Activated B cell treated with CpG ODN at 0.5 μM for 24 hours (primary cell): ENCODE measurements at regions of chr19 and their contacts with region 1.

Region 1: DNA sequence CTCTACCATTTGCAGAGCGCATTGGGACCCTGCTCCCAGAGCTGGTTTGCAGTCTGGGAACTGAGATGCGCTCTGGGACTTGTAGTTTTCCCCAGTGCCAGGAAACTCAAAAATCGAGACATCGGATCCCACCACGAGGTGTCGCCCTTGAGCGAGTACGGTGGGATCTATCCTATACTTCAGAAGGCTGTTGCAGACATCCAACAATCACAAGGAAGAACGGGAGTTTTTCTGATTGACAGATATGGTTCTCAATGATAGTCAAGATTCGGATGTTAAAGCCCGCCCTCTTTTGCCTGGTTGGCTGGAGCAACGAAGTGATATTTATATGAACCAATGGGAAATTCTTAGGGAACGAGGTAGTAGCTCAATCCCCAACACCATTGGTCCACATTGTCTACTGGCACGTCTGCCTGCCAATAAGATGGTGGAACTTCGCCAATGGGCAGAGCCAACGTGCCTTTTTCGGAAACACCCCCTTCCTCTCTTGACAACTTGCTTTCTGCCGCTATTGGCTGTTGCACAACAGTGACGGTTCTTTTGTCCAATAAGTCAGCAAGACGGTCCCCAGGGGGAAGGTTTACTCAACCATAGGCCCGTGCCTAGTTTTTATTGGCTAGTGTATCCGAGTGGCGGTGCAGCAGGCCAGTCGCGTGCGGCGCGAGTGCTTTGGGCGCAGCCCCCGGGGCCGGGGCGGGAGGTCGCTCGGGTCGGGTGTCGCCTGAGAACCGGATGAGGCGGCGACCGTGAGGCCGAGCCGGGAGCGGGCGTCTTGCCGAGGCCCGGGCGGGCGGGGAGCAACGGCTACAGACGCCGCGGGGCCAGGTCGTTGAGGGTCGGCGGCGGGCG is at the start of gene DNM2:
- DNase-seq: peak; percentile 92
- ATAC-seq: peak; percentile 86
- H3K4me3 Mint-ChIP-seq: peak within 1 kb of the TSS; percentile 91
- H3K27ac Mint-ChIP-seq: peak within 1 kb of the TSS; percentile 80
- H3K4me1 Mint-ChIP-seq: peaks cover 51% of the 10 kb centered on the region
- H3K27me3 Mint-ChIP-seq: no peaks in the 10 kb centered on the region
- CTCF ChIP-seq: no peak
- total RNA-seq, gene DNM2: 220 and 257 TPM in 2 replicates

Region 2: DNA sequence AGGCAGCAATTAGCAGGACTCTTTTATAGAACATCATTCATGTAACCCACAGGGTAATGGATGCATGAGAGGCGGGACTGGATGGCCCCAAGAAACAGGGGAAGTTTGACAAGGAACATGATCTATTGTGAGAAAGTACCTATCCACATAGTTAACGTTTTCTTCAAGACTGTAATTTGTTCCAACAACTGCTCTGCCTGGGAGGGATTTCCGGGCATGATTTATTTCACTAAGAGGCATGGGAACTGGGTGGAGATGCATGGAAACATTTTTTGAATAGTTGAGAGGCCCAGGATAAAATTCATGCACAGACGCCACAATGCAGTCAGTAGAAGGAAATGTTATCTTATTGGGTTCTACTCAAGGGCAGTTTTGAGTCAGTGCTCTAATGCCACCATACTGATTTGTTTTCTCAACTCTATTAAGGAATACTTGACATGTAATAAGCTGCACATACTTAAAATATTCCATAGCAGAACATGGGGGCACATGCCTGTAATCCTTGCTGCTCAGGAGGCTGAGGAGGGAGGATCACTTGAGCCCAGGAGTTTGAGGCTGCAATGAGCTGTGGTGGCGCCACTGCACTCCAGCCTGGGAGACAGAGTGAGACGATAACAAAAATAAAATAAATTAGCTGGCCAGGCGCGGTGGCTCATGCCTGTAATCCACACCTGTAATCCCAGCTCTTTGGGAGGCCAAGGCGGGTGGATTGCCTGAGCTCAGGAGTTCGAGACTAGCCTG is 183.8 kb before region 1 on chr19:
- CTCF ChIA-PET with region 1: no interaction called
- POLR2A ChIA-PET with region 1: no interaction called
- intact Hi-C with region 1: no loop called
- DNase-seq: no peak
- ATAC-seq: no peak
- H3K4me3 Mint-ChIP-seq: no peak overlapping the region
- H3K27ac Mint-ChIP-seq: no peak overlapping the region
- H3K4me1 Mint-ChIP-seq: peaks cover 2% of the 10 kb centered on the region
- H3K27me3 Mint-ChIP-seq: peaks cover 12% of the 10 kb centered on the region
- CTCF ChIP-seq: no peak

Region 3: GRCh38 chr19:10685210-10685609 is 32.4 kb before region 1 on chr19:
- CTCF ChIA-PET with region 1: no interaction called
- POLR2A ChIA-PET with region 1: no interaction called
- intact Hi-C with region 1: no loop called
- DNase-seq: no peak
- ATAC-seq: no peak
- H3K4me3 Mint-ChIP-seq: no peak overlapping the region
- H3K27ac Mint-ChIP-seq: no peak overlapping the region
- H3K4me1 Mint-ChIP-seq: no peaks in the 10 kb centered on the region
- H3K27me3 Mint-ChIP-seq: no peaks in the 10 kb centered on the region
- CTCF ChIP-seq: no peak

Region 4: DNA sequence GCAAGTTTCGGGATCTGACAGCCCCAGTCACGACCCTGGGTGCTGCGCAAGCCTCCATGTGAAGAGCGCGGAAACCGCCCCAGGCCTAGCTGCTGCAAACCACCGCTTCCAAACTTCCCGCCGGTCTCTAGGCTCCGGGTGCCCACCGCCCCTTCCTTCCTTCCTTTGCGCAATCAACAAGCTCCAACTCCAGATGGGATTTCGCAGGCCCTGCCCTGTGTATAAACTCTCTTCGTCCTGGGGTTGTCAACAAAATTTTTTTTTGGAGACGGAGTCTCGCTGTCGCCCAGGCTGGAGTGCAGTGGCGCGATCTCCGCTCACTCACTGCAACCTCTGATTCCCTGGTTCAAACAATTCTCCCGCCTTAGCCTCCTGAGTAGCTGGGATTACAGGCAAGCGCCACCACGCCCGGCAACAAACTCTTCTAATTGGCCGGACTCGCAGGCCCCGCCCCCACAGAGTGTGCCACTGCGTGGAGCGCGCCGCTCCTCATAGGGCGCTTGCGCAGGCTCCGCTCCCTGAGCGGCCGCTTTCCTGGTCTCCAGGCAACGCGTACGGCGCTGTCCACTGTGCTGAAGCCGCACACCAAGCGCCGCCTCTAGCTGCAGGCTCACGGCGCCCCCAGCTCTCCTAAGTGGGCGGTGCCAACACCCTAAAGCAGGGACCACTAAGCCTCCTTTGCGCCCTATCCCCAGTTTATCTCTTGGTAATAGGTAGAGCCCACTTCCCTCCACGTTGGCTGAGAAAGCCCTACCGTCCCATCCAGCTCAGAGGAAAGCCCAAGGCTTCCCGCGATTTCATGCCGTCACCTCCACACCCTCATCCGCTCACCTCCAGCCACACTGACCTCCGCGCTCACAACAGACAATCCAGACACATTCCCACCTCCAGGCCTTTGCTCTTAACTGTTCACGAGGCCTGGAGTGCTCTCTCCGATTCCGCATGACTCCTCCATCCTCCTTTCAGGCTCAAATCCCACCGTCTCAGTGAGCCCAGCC is 21.9 kb before region 1 on chr19:
- CTCF ChIA-PET with region 1: interaction called, 5 read pairs
- POLR2A ChIA-PET with region 1: interaction called, 22 read pairs
- intact Hi-C with region 1: no loop called
- DNase-seq: peak; percentile 79
- ATAC-seq: peak; percentile 98
- H3K4me3 Mint-ChIP-seq: peak overlapping the region; percentile 76
- H3K27ac Mint-ChIP-seq: peak overlapping the region; percentile 26
- H3K4me1 Mint-ChIP-seq: peaks cover 17% of the 10 kb centered on the region
- H3K27me3 Mint-ChIP-seq: peaks cover 5% of the 10 kb centered on the region
- CTCF ChIP-seq: no peak

Region 5: DNA sequence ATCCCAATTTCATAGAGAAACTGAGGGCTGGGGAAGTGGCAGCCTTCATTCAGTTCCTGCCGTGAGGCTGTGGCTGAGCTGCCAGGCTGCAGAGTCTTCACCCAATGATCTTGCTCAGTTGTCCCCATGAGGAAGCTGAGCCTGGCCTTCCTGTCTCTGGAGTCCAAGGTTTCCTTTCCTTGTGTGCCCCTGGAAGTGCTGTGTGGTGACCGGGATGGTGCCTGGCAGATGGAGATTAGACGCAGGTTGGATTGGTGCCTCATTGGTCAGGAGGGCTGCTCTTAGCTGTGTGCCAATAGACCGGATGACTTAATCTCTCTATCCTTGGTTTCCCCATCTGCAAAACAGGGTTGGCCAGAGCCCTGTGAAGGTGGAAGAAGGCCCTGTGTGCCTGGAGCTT is 24.9 kb after region 1 on chr19:
- CTCF ChIA-PET with region 1: no interaction called
- POLR2A ChIA-PET with region 1: interaction called, 4 read pairs
- intact Hi-C with region 1: loop called (anchors 2 kb)
- DNase-seq: no peak
- ATAC-seq: no peak
- H3K4me3 Mint-ChIP-seq: no peak overlapping the region
- H3K27ac Mint-ChIP-seq: no peak overlapping the region
- H3K4me1 Mint-ChIP-seq: peaks cover 76% of the 10 kb centered on the region
- H3K27me3 Mint-ChIP-seq: no peaks in the 10 kb centered on the region
- CTCF ChIP-seq: no peak

Region 6: GRCh38 chr19:10769533-10770491 is 52.2 kb after region 1 on chr19:
- CTCF ChIA-PET with region 1: interaction called, 18 read pairs
- POLR2A ChIA-PET with region 1: interaction called, 6 read pairs
- intact Hi-C with region 1: loop called (anchors 1 kb)
- DNase-seq: no peak
- ATAC-seq: no peak
- H3K4me3 Mint-ChIP-seq: no peak overlapping the region
- H3K27ac Mint-ChIP-seq: peak overlapping the region; percentile 78
- H3K4me1 Mint-ChIP-seq: peaks cover 46% of the 10 kb centered on the region
- H3K27me3 Mint-ChIP-seq: no peaks in the 10 kb centered on the region
- CTCF ChIP-seq: no peak

Region 7: GRCh38 chr19:10820173-10820572 is 102.6 kb after region 1 on chr19:
- CTCF ChIA-PET with region 1: interaction called, 18 read pairs
- POLR2A ChIA-PET with region 1: interaction called, 3 read pairs
- intact Hi-C with region 1: loop called (anchors 1 kb)
- DNase-seq: no peak
- ATAC-seq: peak; percentile 47
- H3K4me3 Mint-ChIP-seq: no peak overlapping the region
- H3K27ac Mint-ChIP-seq: peak overlapping the region; percentile 57
- H3K4me1 Mint-ChIP-seq: no peaks in the 10 kb centered on the region
- H3K27me3 Mint-ChIP-seq: no peaks in the 10 kb centered on the region
- CTCF ChIP-seq: no peak

Region 8: DNA sequence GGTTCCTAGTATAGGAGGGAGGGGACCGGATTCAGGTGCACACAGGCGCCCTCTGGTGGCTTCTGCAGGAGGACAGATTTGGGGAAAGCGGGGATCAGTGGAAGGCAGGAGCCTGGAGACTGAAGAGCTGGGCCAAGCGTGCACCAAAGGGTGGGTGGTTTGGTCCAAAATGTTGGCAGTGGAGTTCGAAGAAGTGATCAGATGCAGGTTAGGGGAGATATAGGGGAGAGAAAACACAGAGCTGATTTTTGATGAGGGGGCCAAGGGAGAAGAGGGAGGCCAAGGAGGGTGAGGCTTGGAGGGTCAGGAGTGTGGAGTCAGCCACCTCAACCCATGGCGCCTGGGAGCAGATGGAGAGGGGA is 146.9 kb after region 1 on chr19:
- CTCF ChIA-PET with region 1: interaction called, 53 read pairs
- POLR2A ChIA-PET with region 1: interaction called, 30 read pairs
- intact Hi-C with region 1: loop called (anchors 1 kb)
- DNase-seq: peak; percentile 68
- ATAC-seq: peak; percentile 68
- H3K4me3 Mint-ChIP-seq: peak overlapping the region; percentile 21
- H3K27ac Mint-ChIP-seq: peak overlapping the region; percentile 8
- H3K4me1 Mint-ChIP-seq: peaks cover 28% of the 10 kb centered on the region
- H3K27me3 Mint-ChIP-seq: no peaks in the 10 kb centered on the region
- CTCF ChIP-seq: peak; percentile 27